Activated CD8-positive, alpha-beta T cell treated with anti-CD3 and anti-CD28 coated beads, Interleukin-2, amount 10 ng/mL, durations not matched to agents 7 days and 5 days (primary cell): ENCODE measurements at regions of chrX and their contacts with region 1.

Region 1: DNA sequence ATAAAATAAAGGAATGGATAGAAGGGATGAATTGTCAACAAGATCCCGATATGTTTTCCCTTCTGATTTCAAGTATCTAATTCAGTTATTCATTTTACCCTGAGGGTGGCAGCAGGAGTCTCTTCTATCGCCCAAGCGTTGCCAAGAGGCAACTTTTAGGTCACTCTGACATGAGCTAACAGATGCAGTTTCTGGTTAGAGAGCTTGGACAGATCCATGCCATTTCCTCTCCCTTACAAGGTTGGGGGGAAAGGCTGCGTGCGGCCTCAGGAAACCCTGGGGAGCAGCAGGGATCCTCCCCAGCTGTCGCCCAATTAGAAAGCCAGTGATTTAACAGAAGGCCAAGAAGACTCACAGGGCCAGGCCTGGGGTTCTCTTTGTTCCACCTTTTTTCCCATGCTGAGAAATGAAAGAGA is 35.3 kb upstream of the WAS start:
- DNase-seq: peak; percentile 46
- ATAC-seq: peak; percentile 58
- H3K4me3 Mint-ChIP-seq: no peak overlapping the region
- H3K27ac Mint-ChIP-seq: no peak overlapping the region
- H3K4me1 Mint-ChIP-seq: peaks cover 5% of the 10 kb centered on the region
- H3K27me3 Mint-ChIP-seq: no peaks in the 10 kb centered on the region

Region 2: DNA sequence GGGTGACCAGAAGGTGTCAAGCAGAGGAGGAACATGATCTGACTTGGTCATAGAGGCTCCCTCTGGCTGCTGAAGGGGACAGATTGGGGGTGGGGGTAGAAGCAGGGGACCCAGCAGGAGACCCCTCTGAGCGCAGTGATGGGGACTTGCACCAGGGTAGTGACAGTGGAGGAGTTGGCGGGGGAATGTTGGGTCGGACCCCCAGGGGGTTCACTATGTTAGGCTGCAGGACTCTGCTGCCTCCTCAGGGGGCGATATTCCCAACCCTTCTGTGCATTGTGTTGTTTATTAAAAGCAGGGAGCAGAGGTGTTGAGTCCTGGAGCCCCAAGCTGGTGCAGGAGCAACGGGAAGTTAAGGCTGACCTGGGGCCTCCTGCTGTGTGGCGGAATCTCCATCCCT is 42.3 kb before region 1 on chrX:
- CTCF ChIA-PET with region 1: no interaction called
- POLR2A ChIA-PET with region 1: no interaction called
- DNase-seq: no peak
- ATAC-seq: no peak
- H3K4me3 Mint-ChIP-seq: no peak overlapping the region
- H3K27ac Mint-ChIP-seq: no peak overlapping the region
- H3K4me1 Mint-ChIP-seq: no peaks in the 10 kb centered on the region
- H3K27me3 Mint-ChIP-seq: no peaks in the 10 kb centered on the region

Region 3: DNA sequence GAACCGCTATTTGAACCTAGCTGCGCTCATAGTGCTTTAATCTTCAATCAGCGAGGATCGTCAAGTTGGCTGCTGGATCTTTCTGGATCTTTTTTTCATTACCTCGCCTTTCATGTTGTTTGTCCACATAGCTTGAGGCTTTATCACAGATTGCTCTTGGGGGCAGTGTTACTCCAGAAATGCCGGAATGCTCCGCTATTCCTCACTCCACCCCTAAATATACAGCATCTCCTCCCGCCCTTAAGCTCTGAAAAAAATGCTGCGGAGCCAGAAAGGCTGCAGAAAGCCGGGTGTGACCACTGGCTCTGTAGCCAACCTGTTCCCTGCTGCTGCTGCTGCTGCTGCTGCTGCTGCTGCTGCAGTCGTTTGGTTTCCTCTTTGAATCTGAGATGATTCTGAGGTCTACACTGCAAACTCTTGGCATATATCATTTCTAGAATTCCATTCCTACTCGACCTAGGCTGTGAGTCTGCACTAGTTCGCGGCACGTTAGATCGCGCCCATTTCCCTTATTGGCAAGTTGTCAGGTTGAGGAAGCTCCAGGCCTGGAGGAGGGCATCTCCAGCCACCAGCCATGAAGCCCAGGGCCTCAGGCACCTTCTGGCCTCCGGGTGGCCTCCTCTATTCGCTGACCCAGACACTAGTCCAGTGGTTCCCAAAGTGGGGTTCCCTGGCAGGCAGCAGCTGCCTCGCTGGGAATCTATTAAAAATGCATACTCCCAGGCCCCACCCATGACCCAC is 16.8 kb before region 1 on chrX:
- CTCF ChIA-PET with region 1: interaction called, 10 read pairs
- POLR2A ChIA-PET with region 1: no interaction called
- DNase-seq: peak; percentile 86
- ATAC-seq: peak; percentile 94
- H3K4me3 Mint-ChIP-seq: peak overlapping the region; percentile 26
- H3K27ac Mint-ChIP-seq: peak overlapping the region; percentile 28
- H3K4me1 Mint-ChIP-seq: peaks cover 17% of the 10 kb centered on the region
- H3K27me3 Mint-ChIP-seq: no peaks in the 10 kb centered on the region

Region 4: DNA sequence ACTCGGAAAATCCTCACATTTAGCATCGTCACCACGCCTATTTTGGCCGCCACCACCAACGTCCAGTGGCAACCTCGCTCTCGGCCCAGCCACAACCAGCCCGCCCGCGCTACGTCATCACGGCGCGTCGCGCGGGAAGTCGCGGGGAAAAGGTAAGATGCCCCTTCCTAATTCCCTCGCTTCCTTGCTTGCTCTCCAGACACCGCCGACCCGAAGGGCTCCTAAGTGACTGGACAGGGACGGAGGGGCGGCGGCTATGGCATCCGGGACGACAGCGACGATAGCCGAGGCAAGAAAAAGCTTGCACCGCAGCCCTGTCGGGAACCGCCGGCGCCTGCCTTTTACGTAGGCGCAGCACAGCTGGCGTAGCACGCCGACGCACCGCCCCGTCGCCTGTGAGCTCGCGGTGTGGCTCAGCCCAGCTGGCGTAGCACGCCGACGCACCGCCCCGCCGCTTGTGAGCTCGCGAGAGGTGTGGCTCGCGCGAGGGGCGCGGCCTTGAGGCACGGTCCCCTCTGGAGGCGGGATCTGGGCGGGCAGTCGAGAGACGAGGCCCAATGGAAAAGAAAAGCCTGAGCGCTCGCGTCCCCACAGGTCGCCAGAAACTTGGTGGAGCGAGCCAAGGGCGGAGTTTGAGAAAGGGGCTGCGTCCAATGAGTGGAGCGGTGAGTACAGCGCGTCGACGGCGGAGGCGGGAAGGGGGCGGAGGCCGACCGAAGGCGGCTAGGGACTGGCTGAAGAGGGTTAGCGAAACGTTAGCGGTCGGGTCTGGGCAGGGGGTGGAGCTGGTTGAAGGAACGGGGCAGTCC is 153.1 kb after region 1 on chrX and contains the start of gene HDAC6:
- CTCF ChIA-PET with region 1: interaction called, 11 read pairs
- POLR2A ChIA-PET with region 1: no interaction called
- DNase-seq: peak; percentile 96
- ATAC-seq: peak; percentile 91
- H3K4me3 Mint-ChIP-seq: peak within 1 kb of the TSS; percentile 95
- H3K27ac Mint-ChIP-seq: peak within 1 kb of the TSS; percentile 99
- H3K4me1 Mint-ChIP-seq: peaks cover 22% of the 10 kb centered on the region
- H3K27me3 Mint-ChIP-seq: no peaks in the 10 kb centered on the region
- total RNA-seq, gene HDAC6: 77.3 to 88.9 TPM